ENCODE measurements at regions of chr19 and their contacts with region 1.

Region 1: DNA sequence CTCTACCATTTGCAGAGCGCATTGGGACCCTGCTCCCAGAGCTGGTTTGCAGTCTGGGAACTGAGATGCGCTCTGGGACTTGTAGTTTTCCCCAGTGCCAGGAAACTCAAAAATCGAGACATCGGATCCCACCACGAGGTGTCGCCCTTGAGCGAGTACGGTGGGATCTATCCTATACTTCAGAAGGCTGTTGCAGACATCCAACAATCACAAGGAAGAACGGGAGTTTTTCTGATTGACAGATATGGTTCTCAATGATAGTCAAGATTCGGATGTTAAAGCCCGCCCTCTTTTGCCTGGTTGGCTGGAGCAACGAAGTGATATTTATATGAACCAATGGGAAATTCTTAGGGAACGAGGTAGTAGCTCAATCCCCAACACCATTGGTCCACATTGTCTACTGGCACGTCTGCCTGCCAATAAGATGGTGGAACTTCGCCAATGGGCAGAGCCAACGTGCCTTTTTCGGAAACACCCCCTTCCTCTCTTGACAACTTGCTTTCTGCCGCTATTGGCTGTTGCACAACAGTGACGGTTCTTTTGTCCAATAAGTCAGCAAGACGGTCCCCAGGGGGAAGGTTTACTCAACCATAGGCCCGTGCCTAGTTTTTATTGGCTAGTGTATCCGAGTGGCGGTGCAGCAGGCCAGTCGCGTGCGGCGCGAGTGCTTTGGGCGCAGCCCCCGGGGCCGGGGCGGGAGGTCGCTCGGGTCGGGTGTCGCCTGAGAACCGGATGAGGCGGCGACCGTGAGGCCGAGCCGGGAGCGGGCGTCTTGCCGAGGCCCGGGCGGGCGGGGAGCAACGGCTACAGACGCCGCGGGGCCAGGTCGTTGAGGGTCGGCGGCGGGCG is at the start of gene DNM2:
- DNase-seq: peak; percentile 99
- total RNA-seq, gene DNM2: 138 TPM

Region 2: DNA sequence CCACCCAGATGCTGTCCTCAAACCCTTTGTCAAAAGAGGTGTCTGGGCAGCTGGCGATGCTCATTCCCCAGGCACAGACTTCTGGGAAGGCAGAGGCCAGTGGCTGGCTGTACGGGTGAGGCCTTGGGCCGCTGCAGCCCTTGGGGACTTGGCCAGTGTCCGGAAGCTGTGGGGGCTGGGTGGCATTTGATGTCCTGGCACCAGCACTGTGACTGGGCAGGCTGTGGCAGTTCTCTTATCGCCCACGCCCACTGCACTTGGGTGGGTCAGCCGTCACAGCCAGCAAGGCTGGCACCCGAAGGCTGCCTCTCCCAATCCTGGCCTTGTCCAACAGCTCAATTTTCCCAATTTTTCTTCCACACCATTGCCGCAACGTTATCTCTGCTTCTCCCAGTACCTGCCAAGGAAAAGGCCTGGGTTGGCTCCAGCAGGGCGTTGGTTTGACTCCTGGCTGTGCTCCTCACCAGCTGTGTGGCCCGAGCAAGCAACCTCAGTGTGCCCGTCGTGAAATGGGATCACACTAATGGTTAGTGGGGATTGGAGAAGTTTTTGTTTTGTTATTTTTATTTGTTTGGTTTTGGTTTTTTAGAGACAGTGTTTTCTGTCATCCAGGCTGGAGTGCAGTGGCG is 105.0 kb before region 1 on chr19:
- intact Hi-C with region 1: no loop called
- DNase-seq: peak; percentile 94

Region 3: GRCh38 chr19:10864538-10864899 is 146.9 kb after region 1 on chr19:
- intact Hi-C with region 1: loop called (anchors 2 kb)
- DNase-seq: peak; percentile 92